ENCODE measurements at regions of chr19 and their contacts with region 1.

Region 1: DNA sequence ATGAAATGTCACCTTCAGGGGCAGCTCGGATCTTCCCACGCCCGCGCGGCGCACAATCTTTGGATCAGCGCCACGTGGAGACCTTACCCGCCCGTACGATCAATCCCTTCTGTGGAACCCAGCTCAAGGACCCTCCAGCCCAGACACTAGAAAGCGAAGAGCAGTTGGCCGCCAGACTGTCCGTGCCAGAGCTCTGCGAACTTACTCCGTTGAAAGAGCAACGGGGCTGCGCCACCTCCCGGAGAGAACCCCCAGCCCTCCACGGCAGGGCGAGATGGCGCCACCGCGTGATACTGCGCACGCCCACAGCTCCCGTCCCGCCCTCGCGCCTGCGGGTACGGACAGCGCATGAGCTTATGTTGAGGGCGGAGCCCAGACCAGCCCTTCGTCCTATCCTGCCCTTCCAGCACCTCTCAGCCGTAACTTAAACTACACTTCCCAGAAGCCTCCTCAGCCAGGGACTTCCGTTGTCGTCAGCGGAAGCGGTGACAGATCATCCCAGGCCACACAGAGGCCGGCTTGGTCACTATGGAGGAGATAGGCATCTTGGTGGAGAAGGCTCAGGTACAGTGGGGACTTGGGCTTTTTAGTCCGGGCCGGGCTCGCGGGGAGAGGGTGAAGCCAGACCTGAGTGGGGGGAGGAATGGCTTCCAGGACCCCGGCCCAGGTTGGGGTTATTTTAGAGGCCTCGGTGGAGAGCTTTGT is at the start of gene PSMC4:
- DNase-seq: peak; percentile 99
- ATAC-seq: peak; percentile 97
- H3K4me3 ChIP-seq: peak within 1 kb of the TSS; percentile 76 to 96 (median 89)
- H3K4me3 Mint-ChIP-seq: peak within 1 kb of the TSS; percentile 92
- H3K27ac ChIP-seq: peak within 1 kb of the TSS; percentile 87 to 95
- H3K27ac Mint-ChIP-seq: peak within 1 kb of the TSS; percentile 94
- H3K4me1 ChIP-seq: peaks cover 23 to 25% of the 10 kb centered on the region in 2 donors
- H3K4me1 Mint-ChIP-seq: peaks cover 48% of the 10 kb centered on the region
- H3K27me3 ChIP-seq: no peaks in the 10 kb centered on the region
- H3K27me3 Mint-ChIP-seq: no peaks in the 10 kb centered on the region
- CTCF ChIP-seq: peak; percentile 83
- total RNA-seq, gene PSMC4: 56.6 and 58.2 TPM in 2 replicates

Region 2: DNA sequence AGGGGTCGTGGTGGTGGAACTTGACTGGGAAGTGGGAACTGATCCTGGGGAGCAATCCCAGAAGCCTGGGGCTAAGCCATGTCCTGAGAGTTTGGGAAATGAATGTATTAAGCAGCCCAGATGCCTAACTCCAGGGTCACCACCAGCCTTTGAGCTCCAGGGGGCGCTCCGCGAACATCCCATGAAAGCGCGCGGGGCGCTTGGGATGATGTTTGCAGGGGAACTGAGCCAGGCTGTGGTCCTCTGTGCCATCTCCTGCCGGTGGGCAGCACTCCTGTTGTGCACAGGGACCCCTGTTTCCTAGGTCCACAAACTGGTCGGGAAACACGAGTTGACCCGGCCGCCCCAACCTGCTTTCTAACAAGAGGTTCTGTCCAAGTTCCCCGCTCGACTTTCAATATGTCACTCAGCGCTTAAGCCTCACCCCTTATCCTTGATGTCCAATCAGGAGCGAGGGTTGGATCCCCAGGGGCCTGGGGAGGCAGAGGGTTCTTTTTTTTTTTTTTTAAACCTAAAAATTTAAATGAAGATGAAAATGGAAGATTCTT is 177.8 kb before region 1 on chr19:
- CTCF ChIA-PET with region 1: interaction called, 53 read pairs
- POLR2A ChIA-PET with region 1: interaction called, 6 read pairs
- intact Hi-C with region 1: loop called (anchors 1 kb)
- DNase-seq: peak; percentile 88
- ATAC-seq: peak; percentile 94
- H3K4me3 ChIP-seq: peak overlapping the region; percentile 42 to 76 (median 58)
- H3K4me3 Mint-ChIP-seq: peak overlapping the region; percentile 79
- H3K27ac ChIP-seq: no peak overlapping the region
- H3K27ac Mint-ChIP-seq: peak overlapping the region; percentile 37
- H3K4me1 ChIP-seq: peaks cover 0 to 9% of the 10 kb centered on the region in 2 donors
- H3K4me1 Mint-ChIP-seq: peaks cover 8% of the 10 kb centered on the region
- H3K27me3 ChIP-seq: no peaks in the 10 kb centered on the region
- H3K27me3 Mint-ChIP-seq: peaks cover 6% of the 10 kb centered on the region
- CTCF ChIP-seq: peak; percentile 91

Region 3: DNA sequence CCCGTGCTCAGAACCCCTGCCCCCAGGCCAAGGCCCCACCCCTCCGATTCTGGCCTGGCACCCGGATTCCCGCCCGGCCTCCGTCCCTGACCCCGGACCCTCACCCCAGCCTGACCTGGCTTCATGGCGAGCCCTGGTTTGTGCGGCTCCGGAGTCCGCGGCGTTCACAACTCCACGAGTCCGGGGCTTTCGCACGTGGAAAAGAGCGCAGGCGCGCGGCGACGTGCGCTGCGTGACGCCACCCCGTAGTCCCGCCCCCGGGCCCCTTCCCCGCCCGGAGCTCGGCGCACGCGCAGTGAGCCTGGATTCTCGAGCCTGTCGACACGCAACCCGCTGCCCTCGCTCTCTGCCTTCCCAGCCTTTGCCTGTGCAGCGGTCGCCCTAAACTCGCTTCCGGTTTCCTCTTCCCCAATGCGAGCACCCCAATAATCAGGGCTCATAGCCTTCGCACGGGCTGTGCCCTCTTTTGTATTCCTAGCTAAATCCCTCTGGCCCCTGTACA is 124.6 kb before region 1 on chr19 and contains the start of gene FBL:
- CTCF ChIA-PET with region 1: interaction called, 43 read pairs
- POLR2A ChIA-PET with region 1: interaction called, 6 read pairs
- intact Hi-C with region 1: loop called (anchors 1 kb)
- DNase-seq: peak; percentile 96
- ATAC-seq: peak; percentile 95
- H3K4me3 ChIP-seq: peak within 1 kb of the TSS; percentile 76 to 91 (median 89)
- H3K4me3 Mint-ChIP-seq: peak within 1 kb of the TSS; percentile 95
- H3K27ac ChIP-seq: peak within 1 kb of the TSS; percentile 73 to 88
- H3K27ac Mint-ChIP-seq: peak within 1 kb of the TSS; percentile 96
- H3K4me1 ChIP-seq: peaks cover 27 to 37% of the 10 kb centered on the region in 2 donors
- H3K4me1 Mint-ChIP-seq: peaks cover 49% of the 10 kb centered on the region
- H3K27me3 ChIP-seq: no peaks in the 10 kb centered on the region
- H3K27me3 Mint-ChIP-seq: peaks cover under 1% of the 10 kb centered on the region
- CTCF ChIP-seq: no peak
- total RNA-seq, gene FBL: 253 and 254 TPM in 2 replicates

Region 4: DNA sequence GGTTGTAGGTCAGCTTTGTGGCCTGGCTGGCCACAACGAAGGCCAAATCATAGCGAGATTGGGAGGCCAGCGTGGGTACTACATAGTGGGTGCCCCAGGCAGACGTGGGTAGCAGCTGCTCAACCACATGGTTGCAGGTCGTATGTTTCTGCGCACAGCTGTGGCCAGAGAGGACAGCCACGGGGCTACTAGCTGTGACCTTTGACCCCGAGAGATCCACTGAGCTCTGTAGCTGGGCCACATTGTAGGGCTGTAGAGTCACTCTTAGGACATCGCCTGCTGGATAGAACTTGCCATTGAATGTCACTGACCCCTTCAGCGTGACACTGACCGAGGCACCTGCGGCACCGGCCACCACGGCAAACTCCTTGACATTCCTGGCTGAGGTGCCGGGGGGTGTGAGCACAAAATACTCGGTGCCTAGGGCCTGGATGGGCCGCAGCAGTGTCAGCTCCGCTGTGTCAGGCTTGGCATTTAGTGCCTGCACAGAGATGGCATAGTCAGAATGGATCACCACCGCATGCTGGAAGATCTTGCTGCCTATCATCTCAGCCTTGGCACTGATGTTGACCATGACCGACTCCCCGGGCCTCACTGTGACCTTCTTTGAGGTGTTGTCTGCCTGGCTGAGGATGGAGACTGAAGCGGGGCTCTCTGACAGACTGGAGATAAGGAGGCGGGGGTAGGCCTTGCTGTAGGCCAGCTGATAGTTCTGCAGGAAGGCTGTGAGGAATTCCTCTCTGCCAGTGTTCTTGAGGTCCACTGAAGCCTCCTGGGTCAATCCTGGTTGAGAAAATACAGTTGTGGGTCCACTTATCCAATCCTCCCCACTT is 43.1 kb before region 1 on chr19:
- CTCF ChIA-PET with region 1: interaction called, 12 read pairs
- POLR2A ChIA-PET with region 1: no interaction called
- intact Hi-C with region 1: no loop called
- DNase-seq: no peak
- ATAC-seq: no peak
- H3K4me3 ChIP-seq: no peak overlapping the region
- H3K4me3 Mint-ChIP-seq: no peak overlapping the region
- H3K27ac ChIP-seq: no peak overlapping the region
- H3K27ac Mint-ChIP-seq: no peak overlapping the region
- H3K4me1 ChIP-seq: no peaks in the 10 kb centered on the region
- H3K4me1 Mint-ChIP-seq: no peaks in the 10 kb centered on the region
- H3K27me3 ChIP-seq: no peaks in the 10 kb centered on the region
- H3K27me3 Mint-ChIP-seq: peaks cover 6% of the 10 kb centered on the region
- CTCF ChIP-seq: no peak

Region 5: GRCh38 chr19:39996811-39997594 is 26.2 kb after region 1 on chr19 and contains the start of gene ZNF546:
- CTCF ChIA-PET with region 1: interaction called, 12 read pairs
- POLR2A ChIA-PET with region 1: interaction called, 10 read pairs
- intact Hi-C with region 1: loop called (anchors 1 kb)
- DNase-seq: peak; percentile 92
- ATAC-seq: peak; percentile 93
- H3K4me3 ChIP-seq: peak within 1 kb of the TSS; percentile 59 to 98 (median 92)
- H3K4me3 Mint-ChIP-seq: peak within 1 kb of the TSS; percentile 96
- H3K27ac ChIP-seq: peak within 1 kb of the TSS; percentile 78 to 89
- H3K27ac Mint-ChIP-seq: peak within 1 kb of the TSS; percentile 92
- H3K4me1 ChIP-seq: peaks cover 9 to 16% of the 10 kb centered on the region in 2 donors
- H3K4me1 Mint-ChIP-seq: peaks cover 28% of the 10 kb centered on the region
- H3K27me3 ChIP-seq: no peaks in the 10 kb centered on the region
- H3K27me3 Mint-ChIP-seq: no peaks in the 10 kb centered on the region
- CTCF ChIP-seq: no peak
- total RNA-seq, gene ZNF546: 15.7 and 16.6 TPM in 2 replicates

Region 6: GRCh38 chr19:40035996-40036395 is 65.2 kb after region 1 on chr19:
- CTCF ChIA-PET with region 1: no interaction called
- POLR2A ChIA-PET with region 1: no interaction called
- intact Hi-C with region 1: no loop called
- DNase-seq: no peak
- ATAC-seq: no peak
- H3K4me3 ChIP-seq: no peak overlapping the region
- H3K4me3 Mint-ChIP-seq: no peak overlapping the region
- H3K27ac ChIP-seq: no peak overlapping the region
- H3K27ac Mint-ChIP-seq: no peak overlapping the region
- H3K4me1 ChIP-seq: no peaks in the 10 kb centered on the region
- H3K4me1 Mint-ChIP-seq: no peaks in the 10 kb centered on the region
- H3K27me3 ChIP-seq: no peaks in the 10 kb centered on the region
- H3K27me3 Mint-ChIP-seq: no peaks in the 10 kb centered on the region
- CTCF ChIP-seq: no peak